Activated CD8-positive, alpha-beta memory T cell treated with anti-CD3 and anti-CD28 coated beads, Interleukin-2, amount 10 ng/mL, durations not matched to agents 7 days and 5 days (primary cell): ENCODE measurements at regions of chr7 and their contacts with region 1.

Region 1: DNA sequence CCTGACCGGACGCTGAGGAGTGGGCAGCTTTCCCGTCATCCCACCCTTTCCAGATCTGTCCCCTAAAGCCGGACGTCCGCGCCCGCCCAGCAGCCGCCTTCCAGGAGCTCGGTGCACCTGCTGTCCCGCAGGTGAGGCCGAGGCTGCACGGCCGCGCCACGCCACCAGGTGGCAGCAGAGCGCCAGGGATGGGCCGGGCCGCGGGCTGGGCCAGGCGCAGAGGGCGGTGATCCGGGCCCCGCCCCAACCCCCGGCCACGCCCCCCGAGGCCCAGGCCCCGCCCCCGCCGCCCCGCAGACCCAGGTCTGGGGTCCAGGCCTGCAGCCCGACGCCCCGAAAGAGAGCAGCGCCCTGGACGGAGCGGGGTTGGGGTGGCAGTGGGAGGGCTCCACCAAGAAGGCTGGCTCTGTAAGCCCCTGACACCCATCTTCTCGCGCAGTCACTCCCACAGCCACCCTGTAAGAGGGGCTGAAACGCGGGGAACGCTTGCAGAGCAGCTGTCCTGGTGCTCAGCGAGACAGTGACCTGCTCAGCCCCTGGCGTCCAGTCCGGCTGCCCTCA is 32.2 kb downstream of the FOXL3 start:
- DNase-seq: peak; percentile 81
- ATAC-seq: peak; percentile 94
- H3K4me3 Mint-ChIP-seq: no peak overlapping the region
- H3K27ac Mint-ChIP-seq: no peak overlapping the region
- H3K4me1 Mint-ChIP-seq: peaks cover 4% of the 10 kb centered on the region
- H3K27me3 Mint-ChIP-seq: peaks cover 12% of the 10 kb centered on the region

Region 2: DNA sequence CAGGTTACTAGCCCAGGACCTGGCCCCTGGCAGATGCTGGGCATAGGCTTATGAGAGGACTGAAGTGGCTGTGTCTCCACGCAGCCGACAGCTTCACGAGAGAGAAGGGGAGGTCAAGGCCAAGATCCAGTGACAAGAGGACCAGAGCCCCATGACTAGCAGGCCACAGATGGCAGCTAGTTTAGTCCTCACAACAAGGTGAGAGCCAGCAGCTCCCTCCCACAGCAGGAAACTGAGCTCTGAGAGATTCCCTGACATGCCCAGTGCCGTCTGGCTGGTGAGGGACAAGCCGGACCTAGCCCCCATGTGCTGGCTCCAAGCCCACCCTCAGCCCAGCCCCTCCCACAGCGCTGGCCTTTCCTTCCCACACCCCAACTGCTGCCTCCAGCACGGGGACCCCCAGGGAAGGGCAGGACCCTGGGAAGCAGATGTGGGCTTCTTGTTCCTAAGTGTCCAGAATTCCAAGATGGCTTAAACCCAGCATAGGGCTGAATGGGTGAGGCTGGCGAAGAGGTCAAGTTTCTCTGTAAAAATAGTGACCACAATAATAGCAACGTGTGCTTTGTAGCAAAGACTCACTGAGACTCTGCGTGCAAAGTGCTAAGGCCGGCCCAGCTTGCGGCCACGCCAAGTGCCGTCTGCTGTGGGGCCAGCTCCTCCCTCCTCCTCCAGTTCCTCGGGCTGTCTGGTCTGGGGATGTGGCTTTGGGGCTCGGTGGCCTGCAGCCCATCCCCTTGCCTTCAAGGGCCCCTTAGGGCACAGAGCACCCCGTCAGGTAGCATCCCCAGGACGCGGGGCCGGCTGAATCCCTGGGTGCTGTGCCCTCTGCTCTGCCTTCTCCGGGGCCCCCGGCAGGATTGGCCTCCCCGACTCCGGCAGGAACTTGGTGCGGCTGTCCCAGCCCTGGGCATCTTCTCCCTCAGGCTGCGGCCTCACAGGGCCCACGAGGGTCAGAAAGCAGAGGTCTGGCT is 137.6 kb before region 1 on chr7:
- CTCF ChIA-PET with region 1: no interaction called
- DNase-seq: no peak
- ATAC-seq: no peak
- H3K4me3 Mint-ChIP-seq: no peak overlapping the region
- H3K27ac Mint-ChIP-seq: no peak overlapping the region
- H3K4me1 Mint-ChIP-seq: no peaks in the 10 kb centered on the region
- H3K27me3 Mint-ChIP-seq: no peaks in the 10 kb centered on the region

Region 3: GRCh38 chr7:264541-265191 is 57.5 kb before region 1 on chr7:
- CTCF ChIA-PET with region 1: no interaction called
- DNase-seq: no peak
- ATAC-seq: no peak
- H3K4me3 Mint-ChIP-seq: no peak overlapping the region
- H3K27ac Mint-ChIP-seq: no peak overlapping the region
- H3K4me1 Mint-ChIP-seq: peaks cover 6% of the 10 kb centered on the region
- H3K27me3 Mint-ChIP-seq: no peaks in the 10 kb centered on the region

Region 4: GRCh38 chr7:774161-775109 is 452.2 kb after region 1 on chr7:
- CTCF ChIA-PET with region 1: interaction called, 13 read pairs
- DNase-seq: peak; percentile 66
- ATAC-seq: peak; percentile 66
- H3K4me3 Mint-ChIP-seq: no peak overlapping the region
- H3K27ac Mint-ChIP-seq: no peak overlapping the region
- H3K4me1 Mint-ChIP-seq: no peaks in the 10 kb centered on the region
- H3K27me3 Mint-ChIP-seq: no peaks in the 10 kb centered on the region